ENCODE measurements at regions of chr3 and their contacts with region 1.

Region 1: DNA sequence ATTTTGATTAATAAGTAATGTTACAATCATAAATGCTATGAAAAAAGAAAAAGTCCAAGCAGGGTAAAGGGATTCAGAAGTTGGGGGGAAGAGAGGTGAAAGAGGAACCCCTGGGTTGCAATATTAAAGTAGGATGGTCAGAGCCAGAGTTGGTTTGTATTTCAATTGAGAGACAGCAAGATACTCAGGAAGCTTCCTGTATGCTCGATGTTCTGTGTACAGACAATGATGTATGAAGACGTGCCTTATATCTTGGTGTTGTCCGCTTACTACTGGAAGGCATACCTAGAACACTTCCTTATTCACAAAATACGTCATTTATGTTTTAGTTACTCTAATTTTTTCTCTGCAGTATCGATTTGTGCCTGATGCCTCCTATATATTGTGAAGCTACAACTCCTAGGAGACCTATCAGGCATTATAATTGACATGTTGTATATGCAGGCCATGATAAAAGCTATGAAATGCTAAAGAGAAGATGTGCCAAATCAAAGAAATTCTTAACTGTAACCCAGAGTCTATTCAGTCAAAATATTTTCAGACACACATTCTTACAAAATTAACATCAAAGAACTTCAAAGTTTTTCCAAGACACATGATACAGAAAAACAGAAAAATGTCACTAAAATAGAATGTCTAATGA is 87.5 kb downstream of the TBL1XR1 start:
- DNase-seq: no peak
- H3K4me3 ChIP-seq: no peak overlapping the region
- H3K27ac ChIP-seq: no peak overlapping the region
- H3K4me1 ChIP-seq: peaks cover 66% of the 10 kb centered on the region
- H3K27me3 ChIP-seq: no peaks in the 10 kb centered on the region
- CTCF ChIP-seq: no peak

Region 2: GRCh38 chr3:177069514-177070329 is 40.1 kb before region 1 on chr3:
- intact Hi-C with region 1: loop called (anchors 10 kb)
- DNase-seq: no peak
- H3K4me3 ChIP-seq: no peak overlapping the region
- H3K27ac ChIP-seq: no peak overlapping the region
- H3K4me1 ChIP-seq: peaks cover 61% of the 10 kb centered on the region
- H3K27me3 ChIP-seq: no peaks in the 10 kb centered on the region
- CTCF ChIP-seq: no peak

Measured in left ventricle myocardium inferior (tissue), 1 donor.